ENCODE measurements at regions of chr1 and their contacts with region 1.

Region 1: DNA sequence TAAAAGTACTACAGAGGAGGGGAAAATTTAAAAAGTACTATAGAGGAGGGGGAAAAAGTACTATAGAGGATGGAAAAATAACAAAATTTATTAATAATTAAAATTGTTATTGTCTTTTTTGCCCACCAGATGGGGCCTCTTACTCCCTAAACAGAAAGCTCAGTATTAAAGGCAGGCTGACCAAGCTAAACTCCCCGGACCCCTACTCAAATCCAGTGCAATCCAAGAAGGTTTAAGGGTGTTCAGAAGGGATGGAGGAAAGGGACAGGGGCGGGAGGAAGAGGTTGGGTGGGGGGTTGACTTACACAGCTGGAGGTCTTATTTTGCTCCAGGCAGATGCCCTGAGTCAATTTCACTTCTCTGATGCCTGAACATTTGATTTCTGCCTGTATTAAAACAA is 13.7 kb downstream of the CD34 start:
- DNase-seq: no peak
- H3K4me3 ChIP-seq: no peak overlapping the region
- H3K27me3 ChIP-seq: no peaks in the 10 kb centered on the region
- CTCF ChIP-seq: peak; percentile 45

Region 2: GRCh38 chr1:207848234-207848633 is 49.0 kb before region 1 on chr1:
- CTCF ChIA-PET with region 1: no interaction called
- POLR2A ChIA-PET with region 1: no interaction called
- DNase-seq: no peak
- H3K4me3 ChIP-seq: no peak overlapping the region
- H3K27me3 ChIP-seq: no peaks in the 10 kb centered on the region
- CTCF ChIP-seq: no peak

Region 3: DNA sequence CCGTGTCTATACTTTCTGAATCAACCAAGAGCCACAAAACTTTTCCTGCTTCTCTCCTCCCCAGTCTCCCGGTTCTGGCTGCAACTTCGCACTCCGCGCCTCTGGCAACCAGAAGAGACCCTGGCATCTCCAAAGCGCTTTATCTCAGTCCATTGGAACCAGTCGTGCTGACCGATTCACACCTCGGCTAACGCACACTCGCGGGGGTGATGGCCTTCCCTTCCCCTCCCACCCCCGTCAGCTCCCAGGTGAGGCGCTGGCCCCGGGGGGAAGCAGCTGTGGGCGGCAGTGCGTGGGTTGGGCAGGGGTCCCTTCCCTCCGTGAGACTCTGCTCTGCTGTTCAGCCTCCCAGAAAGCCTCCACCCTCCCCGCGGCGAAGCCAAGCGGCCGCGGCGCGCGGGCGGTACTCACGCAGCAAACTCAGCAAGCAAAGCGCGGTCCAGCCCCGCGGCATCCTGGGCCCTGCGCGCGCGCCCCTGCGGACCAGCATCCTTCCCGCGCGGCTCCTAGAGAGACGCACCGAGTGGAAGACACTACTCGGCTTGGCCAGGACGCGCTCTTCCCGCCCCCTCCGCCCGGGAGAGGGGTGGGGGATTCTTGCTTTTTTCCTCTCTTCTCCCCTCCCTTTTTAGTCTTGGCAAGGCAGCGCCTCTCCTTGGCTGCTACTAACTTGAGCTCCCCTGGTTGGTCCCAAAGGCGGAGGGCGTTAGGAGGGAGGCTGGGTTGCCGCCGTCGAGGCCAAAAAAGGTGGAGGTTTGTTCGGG is 13.6 kb after region 1 on chr1 and contains the start of gene CD34:
- CTCF ChIA-PET with region 1: interaction called, 24 read pairs
- POLR2A ChIA-PET with region 1: no interaction called
- DNase-seq: no peak
- H3K4me3 ChIP-seq: peak within 1 kb of the TSS; percentile 34
- H3K27me3 ChIP-seq: peaks cover 7% of the 10 kb centered on the region
- CTCF ChIP-seq: no peak
- polyA plus RNA-seq, gene CD34: 0.87 and 1.2 TPM in 2 replicates

Region 4: GRCh38 chr1:207958376-207959139 is 61.4 kb after region 1 on chr1:
- CTCF ChIA-PET with region 1: interaction called, 117 read pairs
- POLR2A ChIA-PET with region 1: no interaction called
- DNase-seq: no peak
- H3K4me3 ChIP-seq: no peak overlapping the region
- H3K27me3 ChIP-seq: no peaks in the 10 kb centered on the region
- CTCF ChIP-seq: no peak

Measured in BJ (cell line).